ENCODE measurements at regions of chr7 and their contacts with region 1.

Region 1: DNA sequence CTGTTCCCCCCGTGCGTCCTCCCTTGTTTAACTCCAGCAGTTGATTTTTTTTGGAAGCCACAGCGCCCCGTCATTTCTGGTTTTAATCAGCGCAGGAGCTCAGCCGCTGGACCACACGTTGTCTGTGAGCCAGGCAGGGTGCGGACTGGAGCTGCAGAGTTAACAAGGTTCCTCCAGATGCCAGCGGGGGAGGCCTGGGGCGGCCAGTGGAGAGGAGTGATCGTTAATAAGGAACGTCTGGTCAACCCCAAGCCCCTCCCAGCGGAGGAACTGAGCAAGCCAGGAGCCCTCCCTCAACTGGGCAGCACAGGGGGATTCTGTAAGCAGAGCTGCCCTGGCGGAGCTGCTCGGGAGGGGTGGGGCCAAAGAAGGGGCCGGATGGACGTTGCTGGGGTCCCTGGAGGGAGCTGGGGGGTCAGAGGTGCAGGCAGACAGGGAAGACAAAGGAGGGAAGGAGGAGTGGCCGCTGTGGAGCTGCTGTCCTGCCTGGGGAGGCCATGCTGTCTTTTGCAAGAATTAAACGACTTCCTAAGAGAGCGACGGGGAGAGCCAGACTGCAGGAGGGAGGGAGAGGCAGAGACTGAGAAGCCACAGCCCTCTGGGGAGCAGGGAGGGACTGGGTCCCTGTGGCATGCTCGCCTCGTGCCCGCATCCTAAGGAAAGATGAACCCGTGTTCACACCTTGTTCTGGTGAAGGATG is 537.1 kb upstream of the FOXK1 start:
- DNase-seq: peak; percentile 88
- H3K4me3 ChIP-seq: peak overlapping the region in 3 of 4 donors; percentile 32 to 41 (median 32)
- H3K27ac ChIP-seq: peak overlapping the region in 3 of 4 donors; percentile 13 to 65 (median 28)
- H3K4me1 ChIP-seq: peaks cover 0 to 29% (median 24%) of the 10 kb centered on the region in 4 donors
- H3K27me3 ChIP-seq: no peaks in the 10 kb centered on the region
- CTCF ChIP-seq: no peak
- EP300 ChIP-seq: peak in 1 of 4 donors; percentile 12
- POLR2A ChIP-seq: no peak

Region 2: DNA sequence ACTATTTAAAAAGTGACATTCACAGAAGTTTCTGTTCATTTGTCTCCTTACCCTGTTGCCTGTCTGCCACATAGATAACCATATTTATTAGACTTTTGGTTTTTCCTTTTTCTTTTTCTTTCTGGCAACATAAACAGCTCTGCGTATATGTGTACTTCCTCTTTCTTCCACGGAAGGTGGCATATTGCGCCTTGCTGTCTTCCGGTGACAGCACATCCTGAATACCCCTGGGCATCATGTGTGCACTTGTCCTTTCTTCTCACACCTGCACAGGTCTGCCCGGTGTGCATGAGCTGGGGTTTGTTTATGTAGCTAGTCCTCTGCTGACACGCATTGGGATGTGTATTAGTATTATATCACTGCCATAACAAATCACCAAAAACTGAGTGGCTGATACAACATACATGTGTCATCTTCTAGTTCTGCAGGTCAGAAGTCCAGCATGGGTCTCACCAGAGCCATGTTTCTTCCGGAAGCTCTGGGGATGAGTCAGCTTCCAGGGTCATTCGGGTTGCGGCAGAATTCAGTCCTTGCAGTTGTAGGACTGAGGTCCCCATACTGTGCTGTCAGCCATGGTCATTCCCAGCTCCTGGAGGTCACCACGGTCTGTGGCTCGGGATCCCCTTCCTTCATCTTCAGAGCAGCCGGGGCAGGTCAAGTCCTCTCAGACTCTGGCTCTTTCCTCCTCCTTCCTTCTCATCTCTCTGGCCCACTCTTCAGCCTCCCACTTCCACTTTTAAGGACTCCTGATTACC is 58.8 kb before region 1 on chr7:
- intact Hi-C with region 1: no loop called
- DNase-seq: no peak
- H3K4me3 ChIP-seq: no peak overlapping the region
- H3K27ac ChIP-seq: no peak overlapping the region
- H3K4me1 ChIP-seq: no peaks in the 10 kb centered on the region
- H3K27me3 ChIP-seq: no peaks in the 10 kb centered on the region
- CTCF ChIP-seq: no peak
- EP300 ChIP-seq: no peak
- POLR2A ChIP-seq: no peak

Region 3: GRCh38 chr7:4189131-4189570 is 44.2 kb after region 1 on chr7:
- intact Hi-C with region 1: loop called (anchors 2 kb)
- DNase-seq: peak; percentile 97
- H3K4me3 ChIP-seq: peak overlapping the region in 3 of 4 donors; percentile 6 to 28 (median 16)
- H3K27ac ChIP-seq: peak overlapping the region; percentile 24 to 85 (median 78)
- H3K4me1 ChIP-seq: peaks cover 0 to 60% (median 38%) of the 10 kb centered on the region in 4 donors
- H3K27me3 ChIP-seq: no peaks in the 10 kb centered on the region
- CTCF ChIP-seq: no peak
- EP300 ChIP-seq: peak in 3 of 4 donors; percentile 71 to 88 (median 86)
- POLR2A ChIP-seq: no peak

Region 4: GRCh38 chr7:4257146-4258111 is 112.5 kb after region 1 on chr7:
- intact Hi-C with region 1: loop called (anchors 5 kb)
- DNase-seq: no peak
- H3K4me3 ChIP-seq: peak overlapping the region in 1 of 4 donors; percentile 7
- H3K27ac ChIP-seq: peak overlapping the region in 3 of 4 donors; percentile 71 to 84 (median 75)
- H3K4me1 ChIP-seq: peaks cover 0 to 38% (median 28%) of the 10 kb centered on the region in 4 donors
- H3K27me3 ChIP-seq: no peaks in the 10 kb centered on the region
- CTCF ChIP-seq: no peak
- EP300 ChIP-seq: peak in 2 of 4 donors; percentile 22 to 40
- POLR2A ChIP-seq: no peak

Measured in sigmoid colon (tissue), 7 donors.